A549 (cell line): ENCODE measurements at regions of chr10 and their contacts with region 1.

Region 1: DNA sequence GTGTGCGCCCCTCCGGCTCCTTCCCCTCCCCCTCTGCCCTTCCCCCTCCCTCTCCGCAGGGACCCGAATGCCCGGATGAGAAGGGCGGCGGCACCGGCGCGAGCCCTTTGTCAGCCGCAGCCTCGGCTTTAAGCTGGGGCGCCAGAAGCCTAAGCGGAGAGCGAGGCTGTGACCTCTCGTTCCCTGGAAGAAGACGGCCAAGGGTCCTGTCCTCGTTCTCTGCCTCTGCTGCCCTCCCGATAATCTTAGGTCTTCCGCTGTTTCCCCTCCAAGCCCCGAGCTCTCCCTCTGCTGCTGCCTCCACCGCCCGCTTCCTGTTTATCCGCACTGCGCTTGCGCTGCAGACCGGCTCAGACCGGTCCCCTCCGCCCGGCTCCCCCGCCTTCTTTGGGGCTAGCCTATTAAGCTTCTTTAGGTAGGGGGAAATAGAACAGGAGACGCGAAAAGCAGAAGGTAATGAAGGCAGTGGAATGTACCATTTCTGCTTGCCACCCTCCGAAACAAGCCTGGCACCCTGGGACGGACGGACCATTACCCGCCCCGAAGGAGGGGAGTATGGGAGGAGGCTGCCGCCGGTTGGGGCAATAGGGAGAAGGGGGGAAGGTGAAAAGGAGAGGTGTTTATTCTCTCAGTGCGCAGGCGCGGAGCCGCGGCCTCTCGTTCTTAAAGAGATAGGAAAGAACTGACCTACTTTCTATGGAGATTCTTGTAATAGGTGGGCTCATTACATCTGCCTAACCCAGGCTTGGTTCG is at the start of gene OGA:
- DNase-seq: peak; percentile 97 to 100
- ATAC-seq: peak; percentile 87 to 94
- H3K4me3 ChIP-seq: peak within 1 kb of the TSS; percentile 96
- H3K27ac ChIP-seq: peak within 1 kb of the TSS; percentile 95 to 97
- H3K4me1 ChIP-seq: peaks cover 30% of the 10 kb centered on the region
- CTCF ChIP-seq: no peak
- EP300 ChIP-seq: no peak
- POLR2A ChIP-seq: peak; percentile 86
- RAD21 ChIP-seq: no peak
- polyA plus RNA-seq, gene OGA: 79.1 and 84.5 TPM in 2 replicates

Region 2: GRCh38 chr10:101830322-101831168 is 12.2 kb after region 1 on chr10:
- CTCF ChIA-PET with region 1: interaction called, 47 read pairs
- POLR2A ChIA-PET with region 1: interaction called, 14 read pairs
- DNase-seq: peak; percentile 93 to 95
- ATAC-seq: peak; percentile 76 to 89
- H3K4me3 ChIP-seq: peak overlapping the region; percentile 53
- H3K27ac ChIP-seq: peak overlapping the region; percentile 84 to 94
- H3K4me1 ChIP-seq: peaks cover 18% of the 10 kb centered on the region
- CTCF ChIP-seq: no peak
- EP300 ChIP-seq: no peak
- POLR2A ChIP-seq: peak; percentile 45
- RAD21 ChIP-seq: no peak